Body of pancreas (tissue), 4 donors: ENCODE measurements at regions of chr14 and their contacts with region 1.

Region 1: GRCh38 chr14:50773632-50774541 is 57.1 kb downstream of the NIN start:
- DNase-seq: peak; percentile 61 to 78 (median 68)
- ATAC-seq: peak; percentile 60
- H3K4me3 ChIP-seq: no peak overlapping the region
- H3K27ac ChIP-seq: peak overlapping the region; percentile 11 to 57 (median 54)
- H3K4me1 ChIP-seq: peaks cover 72% of the 10 kb centered on the region
- H3K27me3 ChIP-seq: no peaks in the 10 kb centered on the region
- CTCF ChIP-seq: peak; percentile 71 to 93 (median 87)
- POLR2A ChIP-seq: no peak

Region 2: GRCh38 chr14:50311975-50312733 is 461.7 kb before region 1 on chr14 and contains the starts of genes DMAC2L and L2HGDH:
- intact Hi-C with region 1: loop called (anchors 10 kb)
- DNase-seq: peak; percentile 92 to 95 (median 93)
- ATAC-seq: peak; percentile 97
- H3K4me3 ChIP-seq: peak within 1 kb of the TSS; percentile 29 to 55
- H3K27ac ChIP-seq: peak within 1 kb of the TSS; percentile 91 to 96 (median 95)
- H3K4me1 ChIP-seq: peaks cover 16% of the 10 kb centered on the region
- H3K27me3 ChIP-seq: no peaks in the 10 kb centered on the region
- CTCF ChIP-seq: peak in 2 of 7 experiments; percentile 40 to 41
- POLR2A ChIP-seq: peak; percentile 70 to 85 (median 81)
- total RNA-seq, gene DMAC2L: 2.6 to 3.9 TPM
- total RNA-seq, gene L2HGDH: 3.4 to 4.9 TPM

Region 3: DNA sequence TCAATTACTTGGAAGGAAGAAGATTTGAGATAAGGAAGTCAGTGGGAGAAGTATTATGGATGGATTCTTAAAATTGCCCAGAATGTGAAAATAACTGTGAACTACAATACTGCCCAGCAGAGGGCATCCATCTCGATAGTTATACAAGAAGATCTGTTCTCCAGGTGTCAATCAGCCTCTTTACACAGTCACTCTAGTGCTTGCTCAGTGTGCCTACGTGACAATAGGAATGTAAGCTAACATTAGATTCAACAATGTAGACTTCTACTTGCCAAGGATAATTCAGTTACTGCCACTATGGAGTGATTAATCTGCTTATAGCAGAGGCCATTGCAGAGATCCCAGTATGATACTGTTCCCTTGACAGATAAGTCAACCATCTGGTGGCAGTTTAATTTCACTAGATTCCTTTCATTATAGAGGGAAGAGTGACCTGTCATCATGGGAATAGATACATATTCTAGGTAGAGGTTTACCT is 230.9 kb before region 1 on chr14:
- intact Hi-C with region 1: no loop called
- DNase-seq: peak; percentile 52 to 67 (median 57)
- ATAC-seq: peak; percentile 54
- H3K4me3 ChIP-seq: no peak overlapping the region
- H3K27ac ChIP-seq: no peak overlapping the region
- H3K4me1 ChIP-seq: peaks cover 35% of the 10 kb centered on the region
- H3K27me3 ChIP-seq: no peaks in the 10 kb centered on the region
- CTCF ChIP-seq: peak; percentile 29 to 67 (median 65)
- POLR2A ChIP-seq: no peak

Region 4: DNA sequence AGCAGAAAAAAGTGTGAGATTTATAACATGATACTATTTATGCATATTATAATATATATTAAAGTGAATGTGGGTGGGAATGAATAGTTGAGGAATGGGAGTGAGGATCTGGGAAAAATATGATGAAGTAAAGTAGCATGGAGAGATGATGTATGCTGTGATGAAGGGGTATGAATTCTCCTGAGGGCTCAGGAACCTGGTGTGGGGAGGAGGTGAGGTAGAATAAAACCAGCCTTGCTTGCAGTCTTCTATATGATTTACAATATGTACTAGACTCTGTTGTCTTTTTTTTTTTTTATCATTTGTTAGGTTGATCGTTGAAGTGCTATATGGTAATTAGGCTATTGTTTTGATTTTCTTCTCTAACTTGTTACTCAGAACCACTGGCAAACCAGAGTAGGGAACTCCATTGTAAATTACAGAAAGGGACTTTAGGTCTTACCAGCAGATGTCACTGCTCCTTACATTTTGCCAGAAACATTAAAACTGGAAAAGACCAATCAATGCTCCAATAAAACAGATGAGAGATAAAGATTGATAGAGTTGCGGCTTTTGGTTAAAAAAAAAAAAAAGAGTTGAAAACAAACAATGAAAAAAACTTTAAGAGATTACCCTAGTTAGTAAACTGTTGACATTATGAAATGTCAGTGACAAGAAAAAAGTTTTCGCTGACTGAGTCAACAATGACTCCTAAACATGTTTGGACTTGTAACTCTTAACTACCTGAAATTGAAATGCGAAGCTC is 174.0 kb before region 1 on chr14:
- intact Hi-C with region 1: loop called (anchors 10 kb)
- DNase-seq: peak in 1 of 4 donors; percentile 5
- ATAC-seq: peak; percentile 77
- H3K4me3 ChIP-seq: no peak overlapping the region
- H3K27ac ChIP-seq: peak overlapping the region in 2 of 4 donors; percentile 47 to 62
- H3K4me1 ChIP-seq: peaks cover 31% of the 10 kb centered on the region
- H3K27me3 ChIP-seq: no peaks in the 10 kb centered on the region
- CTCF ChIP-seq: peak in 6 of 7 experiments; percentile 38 to 82 (median 66)
- POLR2A ChIP-seq: no peak

Region 5: DNA sequence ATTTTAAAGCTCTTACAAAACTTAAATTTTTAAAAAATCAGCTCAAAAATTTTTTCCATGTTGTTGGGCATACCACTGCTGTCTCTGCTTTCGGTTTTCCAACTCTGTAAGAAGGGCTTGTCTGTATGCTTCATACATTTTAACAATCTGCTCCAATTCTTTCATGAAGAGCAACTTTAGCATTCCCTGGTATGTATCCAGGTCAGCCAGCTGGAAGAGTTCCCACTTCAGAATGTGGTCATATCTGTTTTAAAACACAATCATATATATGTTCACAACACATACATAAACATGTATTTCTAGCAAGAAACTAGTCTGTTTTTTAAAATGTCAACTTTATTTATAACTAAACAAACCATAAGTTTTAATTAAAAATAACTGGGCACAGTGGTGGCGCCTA is 138.7 kb before region 1 on chr14:
- intact Hi-C with region 1: no loop called
- DNase-seq: no peak
- ATAC-seq: no peak
- H3K4me3 ChIP-seq: no peak overlapping the region
- H3K27ac ChIP-seq: no peak overlapping the region
- H3K4me1 ChIP-seq: no peaks in the 10 kb centered on the region
- H3K27me3 ChIP-seq: no peaks in the 10 kb centered on the region
- CTCF ChIP-seq: no peak
- POLR2A ChIP-seq: no peak

Region 6: DNA sequence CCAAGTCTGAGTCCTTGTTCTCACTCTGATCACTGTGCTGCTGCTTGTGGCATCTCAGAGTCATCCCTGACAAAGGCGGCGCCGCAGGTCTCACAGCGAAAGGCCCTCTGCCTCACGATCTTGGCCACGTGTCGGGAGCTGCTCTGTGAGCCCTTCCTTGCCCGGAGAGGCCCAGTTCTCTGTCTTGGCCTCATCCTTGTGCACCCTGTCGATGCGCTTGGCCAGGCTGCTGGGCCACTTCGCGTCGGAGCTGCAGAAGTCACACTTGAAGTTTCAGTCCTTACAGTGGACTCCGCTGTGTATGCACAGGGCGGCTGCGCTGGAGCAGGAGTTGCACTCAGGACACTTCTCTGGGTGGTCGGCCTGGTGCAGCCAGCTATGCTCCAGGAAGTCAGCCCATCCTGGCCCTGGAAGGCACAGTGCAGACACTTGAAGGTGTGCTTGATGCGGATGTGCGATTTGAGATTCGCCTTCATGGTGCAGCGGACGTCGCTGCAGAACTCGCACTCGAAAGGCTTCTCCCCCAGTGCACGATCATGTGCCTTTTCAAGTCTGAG is 69.4 kb before region 1 on chr14:
- intact Hi-C with region 1: no loop called
- DNase-seq: no peak
- ATAC-seq: no peak
- H3K4me3 ChIP-seq: no peak overlapping the region
- H3K27ac ChIP-seq: no peak overlapping the region
- H3K4me1 ChIP-seq: peaks cover 5% of the 10 kb centered on the region
- H3K27me3 ChIP-seq: no peaks in the 10 kb centered on the region
- CTCF ChIP-seq: no peak
- POLR2A ChIP-seq: no peak

Region 7: DNA sequence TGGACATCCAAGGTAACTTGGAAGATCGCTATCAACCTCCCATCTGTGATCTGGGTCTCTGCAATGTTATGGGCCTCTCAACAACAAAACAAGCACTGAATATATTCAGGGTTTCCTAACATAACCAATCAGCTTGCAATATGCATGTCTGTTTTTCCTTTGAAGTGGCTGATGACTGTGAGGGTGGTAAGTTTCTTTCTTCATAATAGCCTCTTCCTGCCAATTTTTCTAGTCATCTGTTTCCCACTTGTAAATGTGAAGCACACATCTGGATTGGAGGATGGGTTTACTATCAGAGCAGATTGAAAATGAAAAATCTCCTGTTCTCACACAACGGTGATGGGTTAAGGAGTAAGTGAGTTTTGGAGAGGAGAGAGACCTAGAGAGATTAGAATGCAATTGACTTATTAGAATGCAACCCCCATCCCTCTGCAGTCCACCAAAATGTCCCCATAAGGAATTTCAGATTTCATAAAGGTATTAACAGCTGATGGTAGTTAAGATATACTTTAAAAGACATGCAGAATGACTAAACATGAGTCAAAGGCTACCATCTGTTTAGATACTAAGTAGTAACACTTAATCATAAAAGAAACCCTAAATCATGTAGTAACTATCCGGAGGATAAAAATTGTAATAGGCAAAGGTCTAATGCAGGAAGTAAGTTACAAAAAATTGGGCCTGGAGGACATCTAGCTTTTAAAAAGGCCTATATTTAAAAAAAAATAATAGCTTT is 47.3 kb before region 1 on chr14:
- intact Hi-C with region 1: no loop called
- DNase-seq: no peak
- ATAC-seq: no peak
- H3K4me3 ChIP-seq: no peak overlapping the region
- H3K27ac ChIP-seq: no peak overlapping the region
- H3K4me1 ChIP-seq: no peaks in the 10 kb centered on the region
- H3K27me3 ChIP-seq: no peaks in the 10 kb centered on the region
- CTCF ChIP-seq: no peak
- POLR2A ChIP-seq: no peak